IMR-90 (cell line): ENCODE measurements at regions of chr2 and their contacts with region 1.

Region 1: DNA sequence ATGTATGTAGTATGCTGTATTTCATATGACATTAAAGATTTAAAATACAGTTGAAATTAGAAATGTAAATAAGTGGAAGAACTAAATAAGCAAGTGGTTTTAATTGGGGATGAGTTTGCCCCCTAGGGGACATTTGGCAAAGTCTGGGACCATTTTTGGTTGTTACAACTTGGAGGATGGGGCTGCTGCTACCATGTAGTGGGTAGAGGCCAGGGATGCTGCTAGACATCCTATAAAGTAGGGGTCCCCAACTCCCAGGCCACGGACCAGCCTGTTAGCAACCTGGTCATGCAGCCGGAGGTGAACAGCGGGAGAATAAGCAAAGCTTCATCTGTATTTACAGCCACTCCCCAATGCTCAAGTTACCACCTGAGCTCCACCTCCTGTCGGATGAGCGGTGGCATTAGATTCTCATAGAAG is 27.9 kb upstream of the ASNSD1 start:
- DNase-seq: no peak
- ATAC-seq: no peak
- H3K4me3 ChIP-seq: no peak overlapping the region
- H3K27ac ChIP-seq: no peak overlapping the region
- H3K4me1 ChIP-seq: peaks cover 8% of the 10 kb centered on the region
- H3K27me3 ChIP-seq: no peaks in the 10 kb centered on the region
- CTCF ChIP-seq: peak; percentile 41
- POLR2A ChIP-seq: no peak
- RAD21 ChIP-seq: peak; percentile 27; the same call in 1 of the 2 replicates

Region 2: GRCh38 chr2:189466660-189467059 is 166.7 kb before region 1 on chr2:
- CTCF ChIA-PET with region 1: interaction called, 3 read pairs
- POLR2A ChIA-PET with region 1: no interaction called
- dilution Hi-C with region 1: no loop called
- in situ Hi-C with region 1: loop called (anchors 10 kb)
- intact Hi-C with region 1: loop called (anchors 1 kb)
- DNase-seq: peak; percentile 50
- ATAC-seq: peak; percentile 73
- H3K4me3 ChIP-seq: no peak overlapping the region
- H3K27ac ChIP-seq: no peak overlapping the region
- H3K4me1 ChIP-seq: no peaks in the 10 kb centered on the region
- H3K27me3 ChIP-seq: no peaks in the 10 kb centered on the region
- CTCF ChIP-seq: peak; percentile 61
- POLR2A ChIP-seq: no peak
- RAD21 ChIP-seq: peak; percentile 61

Region 3: DNA sequence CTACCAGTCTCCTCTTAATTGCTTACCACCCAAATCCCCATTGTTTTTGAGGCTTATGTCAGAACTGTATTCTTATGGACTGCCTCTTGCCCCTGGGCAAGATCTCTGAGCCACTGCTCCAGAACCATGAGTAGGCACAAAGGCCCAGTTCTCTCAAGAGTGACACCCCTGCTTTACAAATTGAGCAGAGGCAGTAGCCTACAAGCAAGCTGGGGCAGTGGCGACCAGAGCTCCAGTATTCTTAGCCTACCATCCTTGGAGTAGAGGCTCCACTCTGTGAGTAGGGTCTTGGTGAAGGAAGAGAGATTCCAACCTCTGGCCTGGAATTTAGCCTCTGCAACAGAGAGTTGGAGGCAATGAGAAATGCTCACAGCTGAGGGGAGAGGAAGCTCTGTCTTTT is 155.6 kb before region 1 on chr2:
- CTCF ChIA-PET with region 1: no interaction called
- POLR2A ChIA-PET with region 1: no interaction called
- dilution Hi-C with region 1: no loop called
- in situ Hi-C with region 1: loop called (anchors 10 kb)
- intact Hi-C with region 1: loop called (anchors 5 kb)
- DNase-seq: no peak
- ATAC-seq: no peak
- H3K4me3 ChIP-seq: no peak overlapping the region
- H3K27ac ChIP-seq: no peak overlapping the region
- H3K4me1 ChIP-seq: no peaks in the 10 kb centered on the region
- H3K27me3 ChIP-seq: no peaks in the 10 kb centered on the region
- CTCF ChIP-seq: no peak
- POLR2A ChIP-seq: no peak
- RAD21 ChIP-seq: no peak

Region 4: DNA sequence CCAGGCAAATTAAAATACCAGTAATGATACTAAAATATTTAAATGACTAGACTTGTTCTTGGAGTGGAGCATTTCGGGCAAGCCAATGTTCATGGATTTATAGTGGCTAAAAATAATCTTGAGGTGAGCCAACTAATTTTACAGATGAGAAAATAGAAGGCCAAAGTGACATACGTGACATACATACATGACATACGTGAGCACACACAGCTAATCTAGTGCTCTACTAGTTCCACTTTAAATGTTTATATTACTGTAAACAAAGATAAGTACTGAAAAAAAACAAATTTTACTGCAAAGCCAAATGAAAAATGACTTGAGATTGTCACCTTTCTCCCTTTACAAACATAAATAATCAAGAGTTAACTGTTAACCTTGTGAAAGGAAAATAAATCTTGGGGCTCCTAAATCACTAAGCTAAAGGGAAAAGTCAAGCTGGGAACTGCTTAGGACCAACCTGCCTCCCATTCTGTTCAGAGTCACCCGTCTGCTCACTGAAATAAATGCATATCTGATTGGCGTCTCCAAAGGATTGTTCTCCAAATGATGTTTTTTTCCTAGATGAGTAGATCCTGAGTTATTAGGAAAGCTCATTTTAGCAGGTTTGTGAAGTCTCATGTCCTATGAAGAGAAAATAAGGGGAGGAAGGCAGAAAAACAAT is 247.6 kb after region 1 on chr2:
- CTCF ChIA-PET with region 1: no interaction called
- POLR2A ChIA-PET with region 1: no interaction called
- dilution Hi-C with region 1: no loop called
- in situ Hi-C with region 1: no loop called
- intact Hi-C with region 1: no loop called
- DNase-seq: no peak
- ATAC-seq: no peak
- H3K4me3 ChIP-seq: no peak overlapping the region
- H3K27ac ChIP-seq: no peak overlapping the region
- H3K4me1 ChIP-seq: no peaks in the 10 kb centered on the region
- H3K27me3 ChIP-seq: no peaks in the 10 kb centered on the region
- CTCF ChIP-seq: no peak
- POLR2A ChIP-seq: no peak
- RAD21 ChIP-seq: no peak